ENCODE measurements at regions of chr11 and their contacts with region 1.

Region 1: DNA sequence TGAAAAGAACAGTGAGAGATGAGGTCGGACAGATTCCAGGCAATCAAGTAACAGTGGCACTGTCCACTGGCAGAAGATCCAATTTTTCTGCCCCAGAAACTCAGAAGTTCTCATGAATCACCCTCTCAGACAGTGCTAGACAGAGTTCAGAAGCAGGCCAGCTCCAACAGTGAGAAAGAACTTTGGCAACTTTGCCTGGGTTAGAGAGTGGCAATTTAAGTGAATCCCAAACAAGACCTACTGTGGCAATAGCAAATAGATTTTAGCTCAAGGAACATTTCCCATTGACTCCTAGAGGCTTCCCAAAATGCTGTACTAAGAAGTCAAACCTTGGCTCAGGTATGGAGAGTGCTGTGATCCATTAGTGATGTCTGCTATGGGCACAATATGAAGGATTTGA is 12.3 kb downstream of the CD44 start:
- DNase-seq: no peak
- H3K4me3 ChIP-seq: no peak overlapping the region
- H3K27ac ChIP-seq: no peak overlapping the region
- H3K4me1 ChIP-seq: peaks cover 0 to 10% (median 6%) of the 10 kb centered on the region in 4 experiments; a peak in 6 of 7 replicates
- H3K27me3 ChIP-seq: no peaks in the 10 kb centered on the region
- CTCF ChIP-seq: no peak
- EP300 ChIP-seq: no peak
- POLR2A ChIP-seq: no peak
- RAD21 ChIP-seq: no peak

Region 2: GRCh38 chr11:35126000-35126878 is 25.0 kb before region 1 on chr11:
- CTCF ChIA-PET with region 1: no interaction called
- POLR2A ChIA-PET with region 1: no interaction called
- DNase-seq: no peak
- H3K4me3 ChIP-seq: no peak overlapping the region
- H3K27ac ChIP-seq: no peak overlapping the region
- H3K4me1 ChIP-seq: no peaks in the 10 kb centered on the region
- H3K27me3 ChIP-seq: no peaks in the 10 kb centered on the region
- CTCF ChIP-seq: no peak
- EP300 ChIP-seq: no peak
- POLR2A ChIP-seq: no peak
- RAD21 ChIP-seq: no peak

Region 3: DNA sequence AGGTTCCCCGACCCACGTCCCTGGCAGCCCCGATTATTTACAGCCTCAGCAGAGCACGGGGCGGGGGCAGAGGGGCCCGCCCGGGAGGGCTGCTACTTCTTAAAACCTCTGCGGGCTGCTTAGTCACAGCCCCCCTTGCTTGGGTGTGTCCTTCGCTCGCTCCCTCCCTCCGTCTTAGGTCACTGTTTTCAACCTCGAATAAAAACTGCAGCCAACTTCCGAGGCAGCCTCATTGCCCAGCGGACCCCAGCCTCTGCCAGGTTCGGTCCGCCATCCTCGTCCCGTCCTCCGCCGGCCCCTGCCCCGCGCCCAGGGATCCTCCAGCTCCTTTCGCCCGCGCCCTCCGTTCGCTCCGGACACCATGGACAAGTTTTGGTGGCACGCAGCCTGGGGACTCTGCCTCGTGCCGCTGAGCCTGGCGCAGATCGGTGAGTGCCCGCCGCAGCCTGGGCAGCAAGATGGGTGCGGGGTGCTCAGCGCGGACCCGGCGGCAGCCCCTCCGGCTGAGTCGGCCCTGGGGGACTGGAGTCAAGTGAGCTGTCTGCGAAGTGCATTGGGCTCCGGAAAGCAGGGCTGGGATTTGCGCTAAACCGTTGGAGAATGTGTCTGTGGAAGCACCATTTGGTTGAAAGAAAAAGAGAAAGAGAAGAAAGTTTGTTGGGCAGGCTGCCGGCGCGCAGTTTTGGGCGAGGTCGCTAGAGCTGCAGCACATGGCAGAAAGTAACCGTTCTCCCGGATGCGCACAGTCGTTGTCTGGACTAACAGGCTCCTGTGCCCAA is 12.1 kb before region 1 on chr11 and contains the start of gene CD44:
- CTCF ChIA-PET with region 1: interaction called, 3 read pairs
- POLR2A ChIA-PET with region 1: interaction called, 10 read pairs
- DNase-seq: peak in 1 of 2 experiments; percentile 73
- H3K4me3 ChIP-seq: peak within 1 kb of the TSS; percentile 50 to 71 (median 57)
- H3K27ac ChIP-seq: no peak within 1 kb of the TSS
- H3K4me1 ChIP-seq: peaks cover 0 to 8% (median 3%) of the 10 kb centered on the region in 4 experiments; a peak in 5 of 7 replicates
- H3K27me3 ChIP-seq: peaks cover 21 to 35% (median 31%) of the 10 kb centered on the region in 4 experiments
- CTCF ChIP-seq: no peak
- EP300 ChIP-seq: no peak
- POLR2A ChIP-seq: no peak
- RAD21 ChIP-seq: no peak
- total RNA-seq, gene CD44: 11.8 and 13.4 TPM in 2 replicates